H1 (cell line): ENCODE measurements at regions of chr2 and their contacts with region 1.

Region 1: GRCh38 chr2:10434886-10435819 is 13.0 kb downstream of the ODC1 start:
- DNase-seq: peak in 1 of 2 experiments; percentile 93
- H3K4me3 ChIP-seq: no peak overlapping the region
- H3K27ac ChIP-seq: no peak overlapping the region
- H3K4me1 ChIP-seq: peaks cover 0 to 3% (median 1%) of the 10 kb centered on the region in 4 experiments; a peak in 3 of 7 replicates
- H3K27me3 ChIP-seq: peaks cover 0 to 8% (median 3%) of the 10 kb centered on the region in 4 experiments; a peak in 3 of 7 replicates
- CTCF ChIP-seq: peak in 2 of 3 experiments; percentile 88 to 96; a peak in 3 of 4 replicates
- EP300 ChIP-seq: no peak
- POLR2A ChIP-seq: no peak
- RAD21 ChIP-seq: peak; percentile 99

Region 2: DNA sequence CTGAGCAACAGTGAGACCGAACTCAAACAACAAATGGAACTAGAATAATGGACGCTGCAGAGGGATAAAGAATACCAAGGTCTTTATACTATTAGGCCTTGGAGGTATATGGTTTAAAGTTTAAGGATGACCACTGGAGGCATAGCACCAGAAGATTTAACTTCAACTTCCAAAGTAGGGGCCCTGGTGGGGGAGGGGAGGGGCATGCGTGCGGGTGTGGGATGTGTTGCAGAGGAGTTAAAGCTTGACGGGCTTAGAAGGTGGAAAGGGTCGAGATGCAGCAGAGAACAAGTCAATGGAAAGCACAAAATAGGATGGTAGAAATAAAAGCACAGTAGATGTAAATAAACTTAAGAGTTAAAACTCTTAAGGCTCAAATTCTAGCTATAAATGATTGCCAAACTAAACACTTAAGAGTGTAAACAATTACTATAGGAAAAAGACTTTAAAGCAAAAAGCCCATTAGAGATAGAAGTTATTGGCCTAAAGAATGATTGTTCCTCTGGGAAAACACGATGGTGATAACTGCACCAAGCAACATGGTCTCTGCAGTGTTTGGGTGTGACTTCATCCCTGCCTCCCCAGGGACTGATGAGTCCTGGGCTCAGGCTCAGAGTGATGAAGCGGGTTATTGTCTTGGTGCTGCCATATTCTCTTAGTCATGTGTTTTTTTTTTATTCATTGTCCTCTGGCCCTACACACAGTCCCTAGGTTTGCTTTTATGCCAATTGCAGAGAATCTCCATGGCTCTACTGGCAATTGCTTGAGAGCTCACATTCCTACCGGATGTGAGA is 299.7 kb before region 1 on chr2:
- CTCF ChIA-PET with region 1: interaction called, 44 read pairs
- POLR2A ChIA-PET with region 1: interaction called, 5 read pairs
- DNase-seq: no peak
- H3K4me3 ChIP-seq: no peak overlapping the region
- H3K27ac ChIP-seq: no peak overlapping the region
- H3K4me1 ChIP-seq: peaks cover 2 to 14% (median 5%) of the 10 kb centered on the region in 4 experiments; a peak in 5 of 7 replicates
- H3K27me3 ChIP-seq: no peaks in the 10 kb centered on the region
- CTCF ChIP-seq: no peak
- EP300 ChIP-seq: no peak
- POLR2A ChIP-seq: no peak; a peak in 1 of 3 replicates
- RAD21 ChIP-seq: no peak

Region 3: DNA sequence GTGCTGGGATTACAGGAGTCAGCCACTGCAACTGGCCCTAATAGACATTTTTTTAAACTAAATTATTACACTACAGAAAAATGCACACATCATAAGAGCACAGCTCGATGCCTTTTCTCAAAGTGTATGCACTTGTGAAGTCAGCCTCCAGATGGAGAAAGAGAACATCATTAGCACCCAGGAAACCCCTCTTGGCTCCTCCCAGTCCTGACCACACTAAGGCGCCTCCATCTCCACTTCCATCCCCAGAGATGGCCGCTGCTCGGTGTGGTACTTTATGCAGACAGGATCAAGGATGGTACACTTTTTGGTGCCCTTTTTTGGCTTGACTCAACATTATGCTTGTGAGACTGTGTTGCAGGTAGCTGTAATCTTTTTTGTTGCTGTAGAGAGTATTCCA is 277.9 kb before region 1 on chr2:
- CTCF ChIA-PET with region 1: interaction called, 14 read pairs
- POLR2A ChIA-PET with region 1: interaction called, 3 read pairs
- DNase-seq: no peak
- H3K4me3 ChIP-seq: no peak overlapping the region
- H3K27ac ChIP-seq: no peak overlapping the region
- H3K4me1 ChIP-seq: peaks cover 0 to 7% (median 0%) of the 10 kb centered on the region in 4 experiments; a peak in 1 of 7 replicates
- H3K27me3 ChIP-seq: no peaks in the 10 kb centered on the region
- CTCF ChIP-seq: peak in 1 of 3 experiments; percentile 2; a peak in 1 of 4 replicates
- EP300 ChIP-seq: no peak
- POLR2A ChIP-seq: no peak
- RAD21 ChIP-seq: peak; percentile 15 to 27; a peak in 3 of 4 replicates

Region 4: GRCh38 chr2:10225291-10226037 is 209.7 kb before region 1 on chr2:
- CTCF ChIA-PET with region 1: interaction called, 15 read pairs
- POLR2A ChIA-PET with region 1: interaction called, 3 read pairs
- DNase-seq: no peak
- H3K4me3 ChIP-seq: no peak overlapping the region
- H3K27ac ChIP-seq: no peak overlapping the region
- H3K4me1 ChIP-seq: peaks cover 0 to 3% (median under 1%) of the 10 kb centered on the region in 4 experiments; a peak in 2 of 7 replicates
- H3K27me3 ChIP-seq: no peaks in the 10 kb centered on the region
- CTCF ChIP-seq: no peak
- EP300 ChIP-seq: no peak
- POLR2A ChIP-seq: no peak
- RAD21 ChIP-seq: no peak

Region 5: DNA sequence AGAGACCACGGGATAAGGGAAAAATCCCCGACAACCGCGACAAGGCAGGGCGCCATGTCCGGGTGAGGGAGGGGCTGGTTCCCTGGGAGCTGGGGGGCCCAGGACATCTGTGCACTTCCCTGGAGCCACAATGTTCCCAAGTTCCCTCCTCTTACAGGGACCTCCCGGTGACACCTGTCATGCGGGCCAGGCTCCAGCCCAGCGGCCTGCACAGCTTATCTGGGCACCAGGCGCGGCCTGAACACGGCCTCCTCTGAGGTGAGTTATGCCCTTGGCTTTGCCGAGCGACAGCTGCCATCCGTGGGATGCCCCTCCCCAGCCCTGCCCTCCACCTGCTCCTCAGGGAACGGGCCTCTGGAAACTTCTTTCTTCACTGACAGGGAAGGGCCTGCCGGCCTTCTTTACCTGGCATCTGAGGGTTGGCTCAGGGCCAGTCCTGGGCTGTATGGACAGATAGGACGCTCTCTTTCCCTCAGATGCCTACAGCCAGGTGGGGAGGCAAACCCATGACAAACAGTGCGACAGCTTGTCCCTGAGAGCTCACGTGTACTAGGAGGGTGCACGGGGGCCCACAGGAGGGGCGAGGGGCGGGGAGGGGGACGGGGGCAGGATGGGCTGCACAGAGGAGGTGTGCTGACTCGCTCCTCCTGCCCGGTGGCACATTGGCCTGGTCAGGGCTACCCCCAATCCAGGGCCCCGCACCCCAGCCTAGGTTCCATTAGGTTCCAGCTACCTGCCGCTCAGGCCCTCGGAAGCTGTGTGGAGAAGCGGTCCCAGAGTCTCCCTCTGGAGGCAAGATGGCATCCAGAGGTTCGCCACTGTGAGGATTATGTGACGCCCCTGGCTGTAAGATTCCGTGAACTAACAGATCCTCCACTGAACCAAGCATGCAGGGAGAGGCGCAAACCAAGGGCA is 167.3 kb before region 1 on chr2:
- CTCF ChIA-PET with region 1: interaction called, 31 read pairs
- POLR2A ChIA-PET with region 1: no interaction called
- DNase-seq: no peak
- H3K4me3 ChIP-seq: no peak overlapping the region
- H3K27ac ChIP-seq: no peak overlapping the region
- H3K4me1 ChIP-seq: peaks cover 0 to 2% (median 0%) of the 10 kb centered on the region in 4 experiments; a peak in 1 of 7 replicates
- H3K27me3 ChIP-seq: no peaks in the 10 kb centered on the region
- CTCF ChIP-seq: peak; percentile 44 to 50 (median 49)
- EP300 ChIP-seq: no peak
- POLR2A ChIP-seq: no peak
- RAD21 ChIP-seq: peak; percentile 32 to 52; a peak in 3 of 4 replicates

Region 6: GRCh38 chr2:10424051-10424450 is 11.1 kb before region 1 on chr2:
- CTCF ChIA-PET with region 1: interaction called, 16 read pairs
- POLR2A ChIA-PET with region 1: interaction called, 3 read pairs
- DNase-seq: no peak
- H3K4me3 ChIP-seq: no peak overlapping the region
- H3K27ac ChIP-seq: no peak overlapping the region
- H3K4me1 ChIP-seq: no peaks in the 10 kb centered on the region
- H3K27me3 ChIP-seq: no peaks in the 10 kb centered on the region
- CTCF ChIP-seq: no peak
- EP300 ChIP-seq: no peak
- POLR2A ChIP-seq: no peak
- RAD21 ChIP-seq: no peak